Thyroid gland (tissue), 4 donors: ENCODE measurements at regions of chr4 and their contacts with region 1.

Region 1: GRCh38 chr4:41120297-41121217 is 93.8 kb downstream of the APBB2 start:
- DNase-seq: peak; percentile 92 to 93
- H3K4me3 ChIP-seq: no peak overlapping the region
- H3K27ac ChIP-seq: peak overlapping the region; percentile 89 to 91 (median 89)
- H3K4me1 ChIP-seq: peaks cover 66 to 80% of the 10 kb centered on the region in 2 donors
- H3K27me3 ChIP-seq: no peaks in the 10 kb centered on the region
- CTCF ChIP-seq: no peak
- POLR2A ChIP-seq: peak in 1 of 2 donors; percentile 43

Region 2: GRCh38 chr4:40897557-40898203 is 222.9 kb before region 1 on chr4:
- intact Hi-C with region 1: no loop called
- DNase-seq: peak; percentile 76 to 81
- H3K4me3 ChIP-seq: no peak overlapping the region
- H3K27ac ChIP-seq: no peak overlapping the region
- H3K4me1 ChIP-seq: peaks cover 0 to 3% of the 10 kb centered on the region in 2 donors
- H3K27me3 ChIP-seq: no peaks in the 10 kb centered on the region
- CTCF ChIP-seq: peak; percentile 56 to 85 (median 74)
- POLR2A ChIP-seq: no peak

Region 3: GRCh38 chr4:41204400-41204978 is 83.9 kb after region 1 on chr4:
- intact Hi-C with region 1: loop called (anchors 10 kb)
- DNase-seq: peak; percentile 95 to 98
- H3K4me3 ChIP-seq: no peak overlapping the region
- H3K27ac ChIP-seq: peak overlapping the region; percentile 76 to 85 (median 84)
- H3K4me1 ChIP-seq: peaks cover 81 to 89% of the 10 kb centered on the region in 2 donors
- H3K27me3 ChIP-seq: no peaks in the 10 kb centered on the region
- CTCF ChIP-seq: no peak
- POLR2A ChIP-seq: peak in 1 of 2 donors; percentile 34